Aorta (tissue), 5 donors: ENCODE measurements at regions of chr3 and their contacts with region 1.

Region 1: DNA sequence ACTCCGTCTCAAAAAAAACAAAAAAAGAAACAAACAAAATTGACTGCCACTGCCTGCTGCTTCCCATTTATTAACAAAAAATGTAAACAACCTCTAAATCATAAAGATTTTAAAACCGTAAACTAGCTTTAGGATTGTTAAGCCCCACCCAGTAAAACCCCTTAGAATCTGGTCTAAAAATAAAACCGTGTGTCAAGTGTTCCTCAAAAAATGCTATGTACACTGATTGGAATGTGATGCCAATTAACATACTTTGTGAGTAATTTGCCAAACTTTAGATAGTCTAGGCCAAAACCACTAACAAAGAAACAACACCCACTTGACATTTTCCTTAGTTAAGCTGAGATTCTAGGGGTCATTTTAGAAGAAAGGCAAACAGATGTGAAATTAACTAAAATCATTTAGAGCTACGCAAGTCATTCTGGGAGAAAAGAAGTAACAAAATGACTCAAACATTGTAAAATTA is 5.3 kb downstream of the RAF1 start:
- DNase-seq: no peak
- ATAC-seq: no peak
- H3K4me3 ChIP-seq: no peak overlapping the region
- H3K27ac ChIP-seq: peak overlapping the region in 1 of 2 donors; percentile 36
- H3K4me1 ChIP-seq: peaks cover 5 to 6% of the 10 kb centered on the region in 2 donors
- H3K27me3 ChIP-seq: no peaks in the 10 kb centered on the region

Region 2: GRCh38 chr3:12601072-12601471 is 57.6 kb before region 1 on chr3:
- intact Hi-C with region 1: loop called in 1 of 2 experiments (anchors 10 kb)
- DNase-seq: no peak
- ATAC-seq: no peak
- H3K4me3 ChIP-seq: no peak overlapping the region
- H3K27ac ChIP-seq: peak overlapping the region in 1 of 2 donors; percentile 36
- H3K4me1 ChIP-seq: peaks cover 3% of the 10 kb centered on the region in 2 donors
- H3K27me3 ChIP-seq: no peaks in the 10 kb centered on the region